Dendritic cell treated with granulocyte-macrophage colony-stimulating factor and Interleukin-4, amounts not matched to agents 40 ng/mL and 50 ng/mL, for 4 days (primary cell): ENCODE measurements at regions of chr1 and their contacts with region 1.

Region 1: GRCh38 chr1:37474046-37474759 is at the start of gene ZC3H12A:
- H3K4me3 Mint-ChIP-seq: peak within 1 kb of the TSS; percentile 83
- H3K27ac Mint-ChIP-seq: peak within 1 kb of the TSS; percentile 82
- H3K4me1 Mint-ChIP-seq: peaks cover 74% of the 10 kb centered on the region
- H3K27me3 Mint-ChIP-seq: no peaks in the 10 kb centered on the region

Region 2: DNA sequence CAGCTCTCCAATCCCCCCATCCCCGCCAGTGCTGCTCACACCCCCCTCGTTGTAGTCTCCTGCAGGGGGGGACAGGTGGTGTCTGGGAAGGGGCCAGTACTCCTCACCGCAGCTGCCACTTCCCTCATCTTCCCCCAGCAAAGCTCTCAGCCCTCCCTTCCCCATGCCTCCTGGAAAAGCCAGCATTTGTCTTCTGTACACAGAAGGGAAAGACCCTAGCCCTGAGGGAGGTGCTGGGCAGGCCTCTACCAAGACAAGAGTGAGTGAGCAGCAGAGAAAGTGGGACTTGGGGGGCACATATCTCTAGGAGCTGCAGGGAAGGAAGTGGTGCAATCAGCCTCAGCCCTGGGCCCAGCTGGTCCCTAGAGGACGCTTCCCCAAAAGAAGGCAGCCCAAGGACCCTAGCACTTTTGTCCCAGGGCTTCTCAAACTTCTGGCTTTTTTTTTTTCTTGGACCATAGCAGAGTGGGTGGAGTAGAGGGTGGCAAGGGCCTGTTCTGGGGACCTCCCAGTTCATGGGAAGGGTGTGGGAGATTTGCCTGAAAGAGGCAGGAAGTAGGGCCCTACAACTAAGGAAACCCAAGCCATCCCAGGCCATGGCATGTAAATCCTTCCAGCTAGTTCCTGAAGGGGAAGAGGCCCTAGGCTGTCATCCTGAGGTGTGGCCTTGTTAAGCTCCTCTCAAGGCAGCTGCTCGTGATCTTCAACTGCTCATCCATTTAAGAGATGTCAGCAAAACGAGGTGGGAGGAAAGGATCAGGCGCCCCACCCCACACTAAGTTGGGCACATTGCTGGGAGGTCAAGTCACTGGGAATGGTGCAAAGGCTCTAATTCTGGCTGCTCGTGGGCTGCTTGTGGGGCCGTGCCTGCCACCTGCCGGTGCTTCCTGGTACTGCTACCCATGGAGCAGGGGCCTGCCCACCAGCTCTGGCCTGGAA is 12.7 kb after region 1 on chr1:
- intact Hi-C with region 1: loop called (anchors 2 kb)
- H3K4me3 Mint-ChIP-seq: peak overlapping the region; percentile 22
- H3K27ac Mint-ChIP-seq: peak overlapping the region; percentile 92
- H3K4me1 Mint-ChIP-seq: peaks cover 67% of the 10 kb centered on the region
- H3K27me3 Mint-ChIP-seq: no peaks in the 10 kb centered on the region

Region 3: DNA sequence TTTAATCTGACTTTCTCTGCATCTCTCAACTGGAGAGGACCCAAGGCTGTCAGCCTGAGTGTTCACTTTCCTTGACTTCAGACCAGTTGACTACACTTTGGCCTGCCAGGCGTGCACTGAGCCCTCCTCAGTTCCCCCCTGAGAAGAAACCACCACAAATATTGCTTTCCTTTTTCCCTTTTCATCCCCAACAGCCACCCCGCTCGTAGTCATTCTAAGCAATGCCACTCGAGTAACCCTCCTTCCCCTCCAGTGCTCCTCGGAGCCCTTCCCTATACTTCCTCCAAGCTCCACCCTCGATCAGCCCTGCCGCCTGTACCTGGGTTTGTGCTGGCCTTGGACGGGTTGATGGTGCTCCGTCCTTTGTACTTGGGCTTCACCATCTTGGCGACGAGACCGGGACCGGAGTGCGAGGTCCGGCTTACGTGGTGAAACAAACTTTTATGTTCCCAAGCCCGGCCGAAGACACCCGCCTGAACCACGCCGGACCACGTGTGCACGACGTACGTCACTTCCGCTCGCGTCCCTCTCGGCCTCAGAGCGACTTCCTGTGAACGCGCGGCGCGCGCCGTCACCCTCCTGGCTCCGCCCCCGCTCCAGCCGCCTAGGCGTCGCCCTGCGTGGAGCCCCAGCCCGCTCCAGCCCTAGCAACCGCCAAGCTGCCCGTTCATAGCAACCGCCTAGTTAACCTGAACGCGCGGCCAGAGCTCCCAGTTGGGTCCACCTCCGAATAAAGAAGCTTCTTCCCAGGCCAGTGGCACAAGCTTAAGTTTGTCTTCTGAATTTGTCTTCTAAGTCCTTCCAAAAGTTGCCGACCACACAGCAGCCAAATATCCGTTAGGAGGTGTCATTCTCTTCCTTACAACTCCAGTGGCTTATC is 121.5 kb after region 1 on chr1 and contains the start of gene GNL2:
- intact Hi-C with region 1: loop called (anchors 10 kb)
- H3K4me3 Mint-ChIP-seq: peak within 1 kb of the TSS; percentile 98
- H3K27ac Mint-ChIP-seq: peak within 1 kb of the TSS; percentile 95
- H3K4me1 Mint-ChIP-seq: peaks cover 5% of the 10 kb centered on the region
- H3K27me3 Mint-ChIP-seq: peaks cover 4% of the 10 kb centered on the region